Esophagus squamous epithelium (tissue), 5 donors: ENCODE measurements at regions of chr6 and their contacts with region 1.

Region 1: GRCh38 chr6:165850434-165851019 is 187.5 kb upstream of the PDE10A start:
- DNase-seq: no peak
- H3K4me3 ChIP-seq: peak overlapping the region in 1 of 4 donors; percentile 31
- H3K27ac ChIP-seq: no peak overlapping the region
- H3K4me1 ChIP-seq: peaks cover 0 to 24% (median 0%) of the 10 kb centered on the region in 3 donors
- H3K27me3 ChIP-seq: peaks cover 0 to 77% (median 9%) of the 10 kb centered on the region in 4 donors
- CTCF ChIP-seq: peak; percentile 83 to 96 (median 90)
- POLR2A ChIP-seq: no peak

Region 2: DNA sequence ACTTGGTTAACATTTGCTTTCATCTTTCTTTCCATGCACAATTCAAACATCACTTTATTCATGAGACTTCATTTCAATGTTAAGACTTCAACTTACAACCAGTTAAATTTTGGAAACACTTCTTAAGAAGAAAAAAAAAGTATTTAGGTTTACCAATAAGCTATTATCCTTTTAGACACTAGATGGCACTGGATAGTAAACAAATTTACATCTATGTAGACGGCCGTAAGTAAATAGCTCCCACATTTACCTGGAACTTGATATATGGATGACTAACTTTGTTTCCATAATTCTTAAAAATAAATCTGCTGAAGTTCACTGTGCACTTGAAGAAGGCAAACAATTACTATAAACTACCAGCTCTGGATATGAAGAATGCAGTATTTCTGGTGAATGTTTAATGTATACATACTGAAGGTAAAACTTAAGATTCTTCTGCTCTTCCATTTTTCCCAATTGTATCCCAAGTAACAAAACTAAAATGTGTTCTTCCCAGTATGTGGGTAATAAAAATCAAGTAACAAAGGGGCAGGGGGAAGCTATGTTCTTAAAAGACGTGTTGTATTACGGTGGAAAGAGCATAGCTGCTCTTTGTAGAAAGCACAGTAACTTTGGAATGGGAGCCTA is 410.5 kb before region 1 on chr6:
- intact Hi-C with region 1: loop called (anchors 5 kb)
- DNase-seq: no peak
- H3K4me3 ChIP-seq: no peak overlapping the region
- H3K27ac ChIP-seq: no peak overlapping the region
- H3K4me1 ChIP-seq: no peaks in the 10 kb centered on the region
- H3K27me3 ChIP-seq: no peaks in the 10 kb centered on the region
- CTCF ChIP-seq: peak; percentile 11 to 64 (median 39)
- POLR2A ChIP-seq: no peak

Region 3: GRCh38 chr6:165732696-165733488 is 117.6 kb before region 1 on chr6:
- intact Hi-C with region 1: loop called (anchors 5 kb)
- DNase-seq: no peak
- H3K4me3 ChIP-seq: no peak overlapping the region
- H3K27ac ChIP-seq: no peak overlapping the region
- H3K4me1 ChIP-seq: no peaks in the 10 kb centered on the region
- H3K27me3 ChIP-seq: no peaks in the 10 kb centered on the region
- CTCF ChIP-seq: no peak
- POLR2A ChIP-seq: no peak